Activated T-helper 1 cell treated with anti-CD3 and anti-CD28 coated beads, Interleukin-12 subunit alpha, Interleukin-12 subunit beta, Interleukin-2, Interleukin-4 antibody, amounts not matched to agents 30 ng/mL and 10 ng/mL and 1 ng/mL, durations not matched to agents 14 hours and 24 hours and 36 hours (primary cell): ENCODE measurements at regions of chr6 and their contacts with region 1.

Region 1: DNA sequence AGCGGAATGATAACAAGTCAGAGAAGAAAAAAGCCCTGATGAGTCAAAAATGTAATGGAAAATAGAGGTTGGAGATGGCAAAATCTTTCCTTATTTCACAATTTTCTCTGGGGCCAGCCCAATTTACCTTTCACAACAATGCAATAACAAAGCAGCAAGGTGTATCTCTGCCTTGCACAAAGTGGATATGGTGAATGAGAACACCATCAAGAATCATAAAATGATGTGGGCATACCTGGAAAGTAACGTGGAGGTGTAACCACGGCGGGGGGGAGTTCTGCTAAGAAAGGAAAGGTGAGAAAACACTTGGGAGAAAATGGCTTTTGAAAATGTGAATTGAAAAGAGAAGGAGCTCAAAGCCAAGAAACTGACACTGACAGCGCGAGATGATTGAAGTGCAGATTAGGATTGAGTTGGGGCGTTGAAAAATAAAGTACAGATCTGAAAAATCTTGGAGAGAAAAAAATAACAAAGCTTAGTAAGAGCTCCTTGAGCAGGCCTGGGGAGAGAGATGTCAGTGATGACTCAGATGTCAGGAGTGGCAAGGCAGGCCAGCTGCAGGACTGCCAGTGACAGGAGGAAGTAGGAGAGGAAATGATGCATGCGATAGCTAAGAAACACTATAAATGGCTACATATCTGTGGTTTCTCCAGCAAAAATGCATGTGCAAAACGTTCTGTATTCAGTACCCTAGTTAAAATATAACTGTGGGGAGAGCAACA is 26.2 kb downstream of the ARHGAP18 start:
- DNase-seq: peak; percentile 55
- H3K4me3 Mint-ChIP-seq: peak overlapping the region; percentile 47
- H3K27ac Mint-ChIP-seq: peak overlapping the region; percentile 77
- H3K4me1 Mint-ChIP-seq: peaks cover 63% of the 10 kb centered on the region
- H3K27me3 Mint-ChIP-seq: no peaks in the 10 kb centered on the region

Region 2: DNA sequence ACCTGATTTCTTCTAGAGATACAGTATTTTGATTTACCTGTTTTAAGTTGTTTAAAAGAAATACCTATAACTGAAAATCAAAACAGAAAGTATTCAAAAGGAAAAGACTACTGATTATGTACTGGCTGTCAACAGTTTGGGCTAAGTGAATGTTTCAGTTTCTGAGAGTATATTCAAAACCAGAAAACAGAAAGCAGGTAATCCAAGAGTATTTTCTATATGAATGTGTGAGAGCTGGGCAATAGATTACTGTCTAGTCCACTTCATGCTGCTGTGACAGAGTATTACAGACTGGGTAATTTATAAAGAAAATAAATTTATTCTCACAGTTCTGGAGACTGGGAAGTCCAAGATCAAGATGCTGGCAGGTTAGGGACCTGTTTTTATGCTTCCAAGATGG is 234.8 kb before region 1 on chr6:
- intact Hi-C with region 1: loop called (anchors 5 kb)
- DNase-seq: no peak
- H3K4me3 Mint-ChIP-seq: peak overlapping the region; percentile 6
- H3K27ac Mint-ChIP-seq: no peak overlapping the region
- H3K4me1 Mint-ChIP-seq: peaks cover 74% of the 10 kb centered on the region
- H3K27me3 Mint-ChIP-seq: peaks cover 1% of the 10 kb centered on the region

Region 3: GRCh38 chr6:129695373-129696027 is 11.7 kb after region 1 on chr6:
- intact Hi-C with region 1: loop called (anchors 1 kb)
- DNase-seq: no peak
- H3K4me3 Mint-ChIP-seq: peak overlapping the region; percentile 13
- H3K27ac Mint-ChIP-seq: no peak overlapping the region
- H3K4me1 Mint-ChIP-seq: peaks cover 74% of the 10 kb centered on the region
- H3K27me3 Mint-ChIP-seq: peaks cover 2% of the 10 kb centered on the region

Region 4: GRCh38 chr6:129709769-129710449 is 26.1 kb after region 1 on chr6 and contains the start of gene ARHGAP18:
- intact Hi-C with region 1: loop called (anchors 1 kb)
- DNase-seq: peak; percentile 69
- H3K4me3 Mint-ChIP-seq: peak within 1 kb of the TSS; percentile 96
- H3K27ac Mint-ChIP-seq: peak within 1 kb of the TSS; percentile 79
- H3K4me1 Mint-ChIP-seq: peaks cover 55% of the 10 kb centered on the region
- H3K27me3 Mint-ChIP-seq: no peaks in the 10 kb centered on the region
- total RNA-seq, gene ARHGAP18: 3.8 and 5.0 TPM in 2 replicates

Region 5: DNA sequence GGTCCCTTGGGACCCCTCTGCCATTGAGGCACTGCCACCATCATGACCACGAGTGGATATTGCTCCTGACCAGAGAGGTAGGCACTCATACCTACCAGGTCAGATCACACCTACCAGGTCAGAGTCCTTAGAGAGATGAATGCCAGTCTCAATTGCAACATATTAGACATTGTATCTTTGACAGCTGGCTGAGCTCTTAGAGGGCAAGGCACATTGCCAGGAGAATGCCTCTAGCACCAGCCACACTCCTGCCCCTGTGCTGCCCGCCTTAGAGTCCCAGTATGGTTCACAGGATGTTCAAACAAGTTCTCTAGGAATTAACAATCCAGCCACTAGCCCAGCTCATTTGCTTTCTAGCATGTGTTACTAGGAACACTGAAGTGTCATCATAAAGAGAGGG is 111.5 kb after region 1 on chr6:
- intact Hi-C with region 1: no loop called
- DNase-seq: no peak
- H3K4me3 Mint-ChIP-seq: no peak overlapping the region
- H3K27ac Mint-ChIP-seq: no peak overlapping the region
- H3K4me1 Mint-ChIP-seq: peaks cover 7% of the 10 kb centered on the region
- H3K27me3 Mint-ChIP-seq: peaks cover 26% of the 10 kb centered on the region